ENCODE measurements at regions of chr13 and their contacts with region 1.

Region 1: DNA sequence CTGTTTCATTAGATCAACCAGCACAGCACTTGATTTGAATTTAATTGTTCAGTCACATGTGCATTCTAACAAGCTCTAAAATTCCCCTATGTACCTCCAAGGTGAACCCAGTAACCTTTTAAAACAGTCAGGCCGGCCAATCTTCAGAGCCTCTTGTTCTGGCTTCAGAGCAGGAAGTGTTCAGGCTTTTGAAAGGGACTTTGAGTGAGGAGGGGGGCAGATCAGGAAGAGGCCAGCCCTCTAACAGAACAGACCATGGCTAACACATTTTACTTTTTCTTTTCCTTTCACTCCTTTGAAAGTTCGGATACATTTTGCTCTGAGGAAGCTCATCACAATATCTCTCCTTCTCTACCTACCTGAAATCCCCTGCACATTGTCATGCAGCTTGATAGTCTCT is 390.3 kb downstream of the TBC1D4 start:
- DNase-seq: no peak
- H3K4me3 Mint-ChIP-seq: no peak overlapping the region
- H3K27ac Mint-ChIP-seq: no peak overlapping the region
- H3K4me1 Mint-ChIP-seq: no peaks in the 10 kb centered on the region
- H3K27me3 Mint-ChIP-seq: no peaks in the 10 kb centered on the region

Region 2: DNA sequence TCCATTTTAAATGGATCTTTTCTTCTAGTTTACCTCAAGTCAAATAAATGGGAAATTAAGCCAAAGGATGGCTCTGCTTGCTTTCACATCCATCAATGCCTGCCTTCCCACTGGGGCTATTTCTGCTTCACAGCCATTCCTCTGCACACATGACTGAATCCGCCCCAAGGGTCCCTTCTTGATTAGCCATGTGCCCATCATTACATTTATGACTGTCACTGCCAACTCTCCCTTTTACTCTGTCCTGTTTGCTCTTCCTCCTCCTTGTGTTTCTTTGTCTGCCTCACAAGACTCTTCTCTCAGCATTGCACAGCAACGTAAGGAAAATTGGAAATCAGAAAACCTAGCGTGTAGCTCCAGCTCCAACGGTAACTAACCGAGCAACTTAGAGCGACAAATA is 19.9 kb before region 1 on chr13:
- intact Hi-C with region 1: loop called (anchors 2 kb)
- DNase-seq: no peak
- H3K4me3 Mint-ChIP-seq: no peak overlapping the region
- H3K27ac Mint-ChIP-seq: no peak overlapping the region
- H3K4me1 Mint-ChIP-seq: no peaks in the 10 kb centered on the region
- H3K27me3 Mint-ChIP-seq: no peaks in the 10 kb centered on the region

Region 3: GRCh38 chr13:75299913-75300862 is 208.5 kb after region 1 on chr13:
- intact Hi-C with region 1: no loop called
- DNase-seq: no peak
- H3K4me3 Mint-ChIP-seq: peak overlapping the region; percentile 18
- H3K27ac Mint-ChIP-seq: peak overlapping the region; percentile 87
- H3K4me1 Mint-ChIP-seq: peaks cover 61% of the 10 kb centered on the region
- H3K27me3 Mint-ChIP-seq: no peaks in the 10 kb centered on the region